ENCODE measurements at regions of chr11 and their contacts with region 1.

Region 1: GRCh38 chr11:112289588-112290492 is 29.2 kb upstream of the PLET1 start:
- DNase-seq: peak; percentile 94
- ATAC-seq: peak; percentile 93

Region 2: GRCh38 chr11:111982019-111982464 is 307.8 kb before region 1 on chr11:
- intact Hi-C with region 1: no loop called
- DNase-seq: no peak
- ATAC-seq: peak; percentile 33

Region 3: DNA sequence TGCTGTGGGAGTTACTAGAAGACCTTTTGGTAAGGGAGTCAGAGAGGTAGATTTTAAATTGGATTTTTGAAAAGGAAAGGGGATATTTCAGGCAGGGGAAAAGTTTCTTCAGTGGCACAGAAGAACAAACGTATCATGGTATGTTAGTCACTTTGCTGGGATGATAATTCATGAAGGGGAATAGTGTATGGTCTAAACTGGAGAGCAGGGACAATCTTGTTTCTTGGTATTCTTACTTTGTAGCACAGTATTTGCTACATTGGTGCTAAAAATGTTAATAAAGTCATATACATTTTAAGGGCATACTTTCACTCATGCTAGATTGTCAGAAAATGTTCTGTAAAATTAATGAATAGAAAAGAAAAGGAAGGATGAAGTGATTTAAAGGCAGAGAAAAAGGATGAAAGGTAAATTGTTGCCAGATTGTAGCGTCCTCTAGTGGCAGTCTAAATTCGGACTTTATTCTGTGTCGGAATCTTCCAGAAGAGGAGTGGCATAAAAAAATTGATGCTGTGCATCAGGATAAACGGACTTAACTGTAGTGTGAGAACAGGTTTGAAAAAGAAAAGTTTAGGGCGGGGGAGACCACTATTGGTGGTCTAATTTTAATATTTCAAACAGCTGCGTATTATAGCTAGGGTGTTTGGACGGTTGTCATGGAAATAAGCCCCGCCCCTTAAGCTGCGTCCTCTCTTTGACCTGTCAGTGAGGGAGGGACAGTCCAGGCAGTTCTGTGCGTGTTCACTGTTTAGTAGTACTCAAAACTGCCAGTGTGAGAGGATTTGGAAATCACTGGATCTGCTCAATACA is 114.8 kb before region 1 on chr11 and contains the start of gene BCO2:
- intact Hi-C with region 1: no loop called
- DNase-seq: peak; percentile 88
- ATAC-seq: peak; percentile 96
- total RNA-seq, gene BCO2: 155 TPM

Region 4: DNA sequence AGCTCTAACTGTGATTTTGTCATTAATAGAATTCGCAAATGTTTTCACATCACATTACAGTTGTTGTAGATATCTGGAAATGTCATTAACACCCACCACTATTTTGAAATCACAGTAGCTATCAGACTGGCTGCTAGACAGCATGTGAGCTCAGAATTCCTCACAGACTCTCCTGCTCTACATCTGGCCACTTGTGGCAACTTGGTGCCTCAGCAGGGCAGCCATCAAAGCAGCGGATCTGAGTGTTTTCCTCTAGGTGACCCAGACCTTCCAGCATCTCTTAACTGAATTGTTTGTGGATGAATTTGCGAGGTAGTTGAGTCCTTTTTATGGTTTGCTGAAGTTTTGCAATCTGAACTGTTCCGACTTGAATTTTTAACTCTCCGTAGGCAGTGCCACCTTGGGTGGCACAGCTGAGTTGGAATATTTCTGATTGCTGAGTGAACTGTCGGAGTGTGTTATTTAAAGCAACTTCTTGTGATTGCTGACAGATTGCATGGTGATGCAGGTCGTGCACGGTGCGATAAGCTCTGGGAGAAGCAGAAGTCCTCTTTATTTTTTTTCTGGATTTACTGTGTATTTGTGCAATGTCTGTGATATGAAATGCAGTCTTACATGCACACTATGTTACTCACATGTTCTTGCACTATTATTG is 84.8 kb after region 1 on chr11:
- intact Hi-C with region 1: loop called (anchors 5 kb)
- DNase-seq: no peak
- ATAC-seq: no peak

Region 5: DNA sequence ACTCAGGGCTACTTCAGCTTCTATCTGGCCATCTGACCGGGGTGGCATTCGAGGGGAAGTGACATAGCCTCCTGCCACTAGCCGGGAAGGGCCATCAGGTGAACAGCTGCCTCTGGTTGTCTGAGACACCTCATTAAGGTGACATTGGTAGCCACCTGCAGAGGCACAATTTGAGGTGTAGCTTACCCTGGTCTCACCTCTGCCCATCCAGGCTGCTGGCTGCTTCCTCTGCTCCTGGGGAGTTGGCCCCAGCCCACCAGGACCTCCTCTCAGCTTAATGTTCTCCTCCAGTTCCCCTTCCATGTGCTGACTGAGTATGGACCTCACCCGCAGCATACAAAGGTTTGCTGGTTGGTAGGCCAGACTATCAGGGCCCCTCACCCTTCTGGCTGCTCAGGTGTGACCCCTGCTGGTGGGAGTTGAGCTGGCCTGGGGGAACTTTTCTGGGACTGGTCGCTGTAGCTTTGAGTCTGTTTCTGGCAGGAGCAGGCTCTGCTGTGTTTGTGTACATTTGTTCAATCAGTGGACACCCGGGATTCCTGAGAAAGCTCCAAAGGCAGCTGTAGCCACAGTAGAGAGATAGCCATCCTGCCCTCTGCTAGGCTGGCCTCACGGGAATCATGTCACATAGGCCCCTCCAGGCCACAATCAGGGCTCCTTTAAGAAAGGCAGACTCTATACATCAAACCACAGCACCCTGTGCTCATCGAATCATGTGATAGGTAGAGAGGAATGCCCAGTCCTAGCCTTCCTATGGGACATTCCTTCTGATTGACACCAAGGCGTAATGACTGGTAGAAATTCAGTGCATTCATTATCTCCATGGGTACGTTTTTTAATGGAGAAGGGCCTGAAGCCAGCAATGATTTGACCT is 265.9 kb after region 1 on chr11:
- intact Hi-C with region 1: loop called (anchors 1 kb)
- DNase-seq: peak; percentile 39
- ATAC-seq: peak; percentile 72

Region 6: DNA sequence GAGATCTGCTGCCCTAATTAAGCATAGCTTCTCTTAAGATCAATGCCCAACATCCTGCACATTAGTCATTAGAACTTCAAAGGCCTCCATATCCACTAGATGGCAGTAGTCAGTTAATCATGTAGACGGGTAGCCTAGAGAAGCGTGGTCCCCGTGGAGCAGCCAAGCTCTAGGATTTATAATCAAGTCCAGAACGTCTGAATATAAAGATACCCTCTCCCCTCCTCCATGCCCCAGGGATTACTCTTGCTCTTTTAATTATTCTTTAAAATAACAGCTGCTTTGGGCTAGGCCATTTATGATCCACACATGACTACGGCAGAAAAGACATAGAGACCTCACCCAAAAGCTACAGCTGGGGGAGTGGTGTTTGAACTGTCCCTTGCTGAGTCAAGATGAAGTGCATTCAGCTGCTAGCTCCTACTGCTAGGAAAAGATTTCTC is 298.4 kb after region 1 on chr11:
- intact Hi-C with region 1: loop called (anchors 5 kb)
- DNase-seq: peak; percentile 84
- ATAC-seq: peak; percentile 82

Region 7: DNA sequence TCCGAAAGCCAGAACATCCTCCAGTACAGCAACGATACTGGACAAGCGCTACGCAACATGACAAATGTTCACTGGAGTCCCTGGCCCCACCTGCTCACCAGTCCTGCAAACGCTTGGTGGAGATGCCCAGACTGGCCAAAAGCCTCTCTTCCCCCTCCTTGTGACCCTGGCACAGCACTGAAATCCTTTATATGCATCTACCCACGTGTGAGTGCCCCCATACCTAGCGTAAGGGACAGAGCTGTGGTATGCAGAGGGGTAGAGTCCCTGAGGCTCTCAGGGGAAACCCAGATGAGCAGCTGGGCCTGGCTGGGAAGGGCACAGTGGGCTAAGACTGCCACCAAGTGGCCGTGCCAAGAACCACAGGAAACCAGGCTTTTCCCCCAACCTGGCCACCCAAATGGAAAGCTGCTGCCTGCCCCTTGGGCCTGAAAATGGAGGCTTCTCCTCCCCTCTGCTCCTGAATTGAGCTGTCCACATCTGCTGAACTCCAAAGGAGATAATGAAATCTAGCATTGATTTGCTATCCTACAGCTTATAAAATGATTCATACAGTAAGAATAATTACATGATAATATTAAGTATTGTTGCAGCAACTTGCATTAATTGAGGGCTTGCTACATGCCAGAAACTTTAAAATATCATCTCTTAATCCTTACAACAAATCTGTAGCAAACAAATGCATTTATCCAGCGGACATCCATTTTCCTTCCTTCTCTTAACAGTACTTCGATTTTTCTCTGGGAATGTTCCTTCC is 999.8 kb after region 1 on chr11:
- intact Hi-C with region 1: loop called (anchors 5 kb)
- DNase-seq: no peak
- ATAC-seq: peak; percentile 77